ENCODE measurements at regions of chr6 and their contacts with region 1.

Region 1: DNA sequence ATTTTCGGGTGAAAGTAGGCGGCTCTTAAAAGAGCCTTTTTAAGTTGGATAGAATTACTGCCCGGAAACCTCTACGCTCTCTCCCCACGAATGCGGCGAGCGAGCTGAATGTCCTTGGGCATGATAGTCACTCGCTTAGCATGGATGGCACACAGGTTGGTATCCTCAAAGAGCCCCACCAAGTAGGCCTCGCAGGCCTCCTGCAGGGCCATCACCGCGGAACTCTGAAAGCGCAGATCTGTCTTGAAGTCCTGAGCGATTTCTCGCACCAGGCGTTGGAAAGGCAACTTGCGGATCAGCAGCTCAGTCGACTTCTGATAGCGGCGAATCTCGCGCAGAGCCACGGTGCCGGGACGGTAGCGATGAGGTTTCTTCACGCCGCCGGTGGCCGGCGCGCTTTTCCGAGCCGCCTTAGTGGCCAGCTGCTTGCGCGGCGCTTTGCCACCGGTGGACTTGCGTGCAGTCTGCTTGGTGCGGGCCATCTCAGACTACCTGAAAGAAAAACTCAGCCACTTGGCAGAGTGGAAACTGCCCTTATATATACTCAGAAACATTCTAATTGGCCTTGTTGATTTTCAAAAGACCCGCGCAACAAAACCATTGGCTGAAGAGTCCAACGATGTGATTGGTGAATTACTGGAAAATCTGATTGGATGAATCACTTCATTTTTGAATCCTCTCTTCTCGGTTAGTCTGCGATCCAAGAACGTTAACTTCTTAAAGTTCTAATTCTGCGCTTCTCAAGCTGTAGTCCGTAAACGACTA is 93.9 kb upstream of the BTN3A2 start:
- DNase-seq: peak in 1 of 2 donors; percentile 87
- H3K4me3 ChIP-seq: peak overlapping the region; percentile 54 to 72
- H3K27ac ChIP-seq: peak overlapping the region; percentile 93 to 95
- H3K4me1 ChIP-seq: peaks cover 0 to 10% of the 10 kb centered on the region in 2 donors
- H3K27me3 ChIP-seq: no peaks in the 10 kb centered on the region
- CTCF ChIP-seq: no peak

Region 2: GRCh38 chr6:26045065-26045927 is 225.8 kb before region 1 on chr6:
- intact Hi-C with region 1: loop called (anchors 5 kb)
- DNase-seq: peak; percentile 55 to 91
- H3K4me3 ChIP-seq: peak overlapping the region; percentile 67 to 75
- H3K27ac ChIP-seq: peak overlapping the region; percentile 90 to 97
- H3K4me1 ChIP-seq: peaks cover 0 to 8% of the 10 kb centered on the region in 2 donors
- H3K27me3 ChIP-seq: no peaks in the 10 kb centered on the region
- CTCF ChIP-seq: no peak

Region 3: GRCh38 chr6:26223650-26224546 is 47.2 kb before region 1 on chr6:
- intact Hi-C with region 1: loop called (anchors 2 kb)
- DNase-seq: peak in 1 of 2 donors; percentile 87
- H3K4me3 ChIP-seq: peak overlapping the region; percentile 64 to 65
- H3K27ac ChIP-seq: peak overlapping the region; percentile 82 to 92
- H3K4me1 ChIP-seq: no peaks in the 10 kb centered on the region
- H3K27me3 ChIP-seq: no peaks in the 10 kb centered on the region
- CTCF ChIP-seq: no peak

Region 4: DNA sequence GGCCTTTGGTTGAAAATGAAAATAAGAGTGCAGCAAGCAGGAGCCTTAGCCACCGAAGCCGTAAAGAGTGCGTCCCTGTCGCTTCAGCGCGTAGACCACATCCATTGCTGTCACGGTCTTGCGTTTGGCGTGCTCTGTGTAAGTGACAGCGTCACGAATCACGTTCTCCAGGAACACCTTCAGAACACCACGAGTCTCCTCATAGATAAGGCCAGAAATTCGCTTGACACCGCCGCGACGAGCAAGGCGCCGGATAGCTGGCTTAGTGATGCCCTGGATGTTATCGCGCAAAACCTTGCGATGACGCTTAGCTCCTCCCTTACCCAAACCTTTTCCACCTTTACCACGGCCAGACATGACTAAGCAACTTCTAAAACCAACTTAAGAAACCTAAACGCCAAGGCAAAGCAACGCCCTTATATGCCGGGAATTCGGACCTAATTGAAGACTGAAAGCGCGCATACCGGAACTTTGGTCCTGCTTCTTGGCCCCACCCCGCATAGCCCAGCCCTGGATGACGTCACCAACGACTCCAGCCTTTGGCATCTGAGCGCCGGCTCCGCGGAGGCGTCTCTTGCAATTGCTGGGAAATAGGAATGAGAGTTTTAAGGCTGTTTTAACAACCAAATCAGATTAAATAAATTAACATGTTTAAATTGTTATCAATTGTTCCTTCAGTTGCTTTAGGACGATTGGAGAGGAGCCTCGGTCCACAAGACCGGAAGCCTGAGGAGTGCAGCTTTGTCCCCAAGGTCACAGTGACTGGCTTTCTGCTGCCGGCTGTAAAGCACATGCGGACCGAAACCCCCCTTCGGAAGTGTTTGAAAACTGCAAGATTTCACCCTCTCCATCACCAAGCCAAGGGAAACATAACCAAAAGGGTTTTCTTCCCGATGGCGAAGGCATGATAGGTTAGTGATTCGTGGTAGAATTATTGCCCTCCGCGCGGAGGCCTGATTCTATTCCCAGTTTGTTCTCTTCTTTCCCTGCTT is 14.4 kb after region 1 on chr6:
- intact Hi-C with region 1: loop called (anchors 1 kb)
- DNase-seq: peak; percentile 92 to 99
- H3K4me3 ChIP-seq: peak overlapping the region; percentile 71 to 79
- H3K27ac ChIP-seq: peak overlapping the region; percentile 93 to 97
- H3K4me1 ChIP-seq: no peaks in the 10 kb centered on the region
- H3K27me3 ChIP-seq: no peaks in the 10 kb centered on the region
- CTCF ChIP-seq: no peak

Region 5: DNA sequence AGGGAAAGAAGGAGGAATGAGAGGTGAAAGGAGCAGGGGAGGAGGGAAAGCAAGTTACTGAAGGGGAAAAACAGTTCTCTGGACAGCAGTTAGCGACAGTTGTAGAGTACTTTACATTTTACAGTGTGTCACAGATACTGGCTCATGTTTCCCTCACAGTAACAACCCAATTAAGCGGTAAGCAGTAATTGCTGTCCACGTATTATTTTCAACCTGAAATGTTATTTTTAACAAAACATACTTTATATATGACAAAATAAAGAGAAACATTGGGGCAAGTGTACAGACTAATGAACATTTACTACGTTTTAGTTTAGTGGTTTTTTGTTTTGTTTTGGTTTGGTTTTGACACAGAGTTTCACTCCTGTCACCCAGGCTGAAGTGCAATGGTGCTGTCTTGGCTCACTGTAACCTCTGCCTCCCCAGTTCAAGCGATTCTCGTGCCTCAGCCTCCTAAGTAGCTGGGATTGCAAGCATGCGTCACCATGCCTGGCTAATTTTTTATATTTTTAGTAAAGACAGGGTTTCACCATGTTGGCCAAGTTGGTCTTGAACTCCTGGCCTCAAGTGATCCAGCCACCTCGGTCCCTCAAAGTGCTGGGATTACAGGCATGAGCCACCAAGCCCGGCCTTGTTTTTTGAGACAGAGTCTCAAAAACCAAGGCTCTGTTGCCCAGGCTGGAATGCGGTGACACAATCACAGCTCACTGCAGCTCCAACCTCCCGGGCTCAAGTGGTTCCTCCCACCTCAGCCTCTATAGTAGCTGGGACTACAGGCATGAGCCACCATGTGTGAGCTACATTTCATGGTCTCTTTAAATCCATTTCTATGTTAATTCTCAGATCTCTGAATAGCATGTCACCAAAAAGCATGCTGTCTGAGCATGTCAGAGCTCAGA is 71.3 kb after region 1 on chr6:
- intact Hi-C with region 1: no loop called
- DNase-seq: no peak
- H3K4me3 ChIP-seq: peak overlapping the region in 1 of 2 donors; percentile 25
- H3K27ac ChIP-seq: no peak overlapping the region
- H3K4me1 ChIP-seq: peaks cover 0 to 3% of the 10 kb centered on the region in 2 donors
- H3K27me3 ChIP-seq: no peaks in the 10 kb centered on the region
- CTCF ChIP-seq: no peak

Region 6: GRCh38 chr6:27146706-27147505 is 875.8 kb after region 1 on chr6:
- intact Hi-C with region 1: loop called (anchors 5 kb)
- DNase-seq: peak; percentile 40 to 91
- H3K4me3 ChIP-seq: peak overlapping the region; percentile 68 to 85
- H3K27ac ChIP-seq: peak overlapping the region; percentile 93
- H3K4me1 ChIP-seq: no peaks in the 10 kb centered on the region
- H3K27me3 ChIP-seq: no peaks in the 10 kb centered on the region
- CTCF ChIP-seq: no peak

Measured in ascending aorta (tissue), 2 donors.